Esophagus muscularis mucosa (tissue), 4 donors: ENCODE measurements at regions of chr3 and their contacts with region 1.

Region 1: GRCh38 chr3:38004415-38005076 is 14.0 kb downstream of the VILL start:
- DNase-seq: no peak
- H3K4me3 ChIP-seq: no peak overlapping the region
- H3K27ac ChIP-seq: peak overlapping the region in 2 of 4 donors; percentile 31 to 57
- H3K4me1 ChIP-seq: peaks cover under 1 to 22% (median 16%) of the 10 kb centered on the region in 4 donors
- H3K27me3 ChIP-seq: no peaks in the 10 kb centered on the region
- CTCF ChIP-seq: peak; percentile 53 to 69 (median 60)
- EP300 ChIP-seq: no peak
- POLR2A ChIP-seq: no peak

Region 2: GRCh38 chr3:37753428-37753827 is 251.1 kb before region 1 on chr3:
- intact Hi-C with region 1: no loop called
- DNase-seq: no peak
- H3K4me3 ChIP-seq: no peak overlapping the region
- H3K27ac ChIP-seq: no peak overlapping the region
- H3K4me1 ChIP-seq: no peaks in the 10 kb centered on the region
- H3K27me3 ChIP-seq: no peaks in the 10 kb centered on the region
- CTCF ChIP-seq: no peak
- EP300 ChIP-seq: no peak
- POLR2A ChIP-seq: no peak

Region 3: DNA sequence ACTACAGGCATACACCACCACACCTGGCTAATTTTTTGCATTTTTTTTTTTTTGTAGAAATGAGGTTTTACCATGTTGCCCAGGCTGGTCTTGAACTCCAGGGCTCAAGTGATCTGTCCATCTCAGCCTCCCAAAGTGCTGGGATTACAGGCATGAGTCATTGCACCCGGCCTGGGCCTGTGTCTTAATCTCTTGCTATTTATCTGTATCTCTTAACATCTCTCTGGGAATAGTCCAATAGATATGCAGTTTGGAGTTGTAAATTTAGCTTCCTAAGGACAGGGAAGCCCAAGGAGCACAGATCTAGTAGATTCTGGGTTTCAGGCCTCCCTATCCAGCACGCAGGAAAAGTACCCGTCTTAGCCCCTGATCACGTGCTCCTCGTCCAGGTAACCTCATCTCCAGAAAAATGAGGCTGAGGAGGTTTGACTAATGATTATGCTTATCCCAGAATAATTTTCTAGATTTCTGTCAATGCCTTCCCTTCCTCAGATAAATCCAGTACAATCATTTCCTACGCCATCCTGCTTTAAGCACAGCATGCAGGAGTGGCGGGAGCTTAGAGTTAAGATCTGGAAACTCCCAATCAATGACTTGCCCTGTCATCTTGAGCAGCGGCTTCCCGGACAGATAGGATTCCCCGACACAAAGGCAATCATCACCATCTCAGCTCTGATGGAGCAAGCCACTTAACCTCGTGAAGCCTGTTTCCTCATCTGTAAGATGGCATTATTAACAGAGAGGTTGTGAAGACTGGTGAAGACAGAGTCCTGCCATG is 155.2 kb before region 1 on chr3:
- intact Hi-C with region 1: no loop called
- DNase-seq: no peak
- H3K4me3 ChIP-seq: no peak overlapping the region
- H3K27ac ChIP-seq: no peak overlapping the region
- H3K4me1 ChIP-seq: peaks cover 0 to 14% (median 5%) of the 10 kb centered on the region in 4 donors
- H3K27me3 ChIP-seq: no peaks in the 10 kb centered on the region
- CTCF ChIP-seq: no peak
- EP300 ChIP-seq: no peak
- POLR2A ChIP-seq: no peak

Region 4: GRCh38 chr3:38039899-38040261 is 35.3 kb after region 1 on chr3:
- intact Hi-C with region 1: loop called (anchors 5 kb)
- DNase-seq: no peak
- H3K4me3 ChIP-seq: peak overlapping the region; percentile 54 to 64 (median 57)
- H3K27ac ChIP-seq: peak overlapping the region in 1 of 4 donors; percentile 26
- H3K4me1 ChIP-seq: peaks cover 9 to 19% (median 16%) of the 10 kb centered on the region in 4 donors
- H3K27me3 ChIP-seq: no peaks in the 10 kb centered on the region
- CTCF ChIP-seq: peak; percentile 40 to 64 (median 43)
- EP300 ChIP-seq: no peak
- POLR2A ChIP-seq: no peak